CD4-positive, alpha-beta T cell (primary cell): ENCODE measurements at regions of chr18 and their contacts with region 1.

Region 1: GRCh38 chr18:1891626-1892025 is 679.7 kb downstream of the METTL4 start:
- DNase-seq: no peak
- ATAC-seq: no peak
- H3K4me3 ChIP-seq: no peak overlapping the region
- H3K4me3 Mint-ChIP-seq: no peak overlapping the region
- H3K27ac ChIP-seq: no peak overlapping the region
- H3K27ac Mint-ChIP-seq: no peak overlapping the region
- H3K4me1 ChIP-seq: no peaks in the 10 kb centered on the region
- H3K4me1 Mint-ChIP-seq: no peaks in the 10 kb centered on the region
- H3K27me3 ChIP-seq: no peaks in the 10 kb centered on the region
- H3K27me3 Mint-ChIP-seq: no peaks in the 10 kb centered on the region
- CTCF ChIP-seq: no peak

Region 2: GRCh38 chr18:1825296-1825695 is 66.3 kb before region 1 on chr18:
- CTCF ChIA-PET with region 1: no interaction called
- POLR2A ChIA-PET with region 1: no interaction called
- intact Hi-C with region 1: loop called in 1 of 2 experiments (anchors 10 kb)
- DNase-seq: no peak
- ATAC-seq: no peak
- H3K4me3 ChIP-seq: no peak overlapping the region
- H3K4me3 Mint-ChIP-seq: no peak overlapping the region
- H3K27ac ChIP-seq: no peak overlapping the region
- H3K27ac Mint-ChIP-seq: no peak overlapping the region
- H3K4me1 ChIP-seq: no peaks in the 10 kb centered on the region
- H3K4me1 Mint-ChIP-seq: no peaks in the 10 kb centered on the region
- H3K27me3 ChIP-seq: no peaks in the 10 kb centered on the region
- H3K27me3 Mint-ChIP-seq: no peaks in the 10 kb centered on the region
- CTCF ChIP-seq: no peak

Region 3: GRCh38 chr18:3177902-3178687 is 1286.5 kb after region 1 on chr18:
- CTCF ChIA-PET with region 1: no interaction called
- POLR2A ChIA-PET with region 1: no interaction called
- intact Hi-C with region 1: no loop called
- DNase-seq: peak in 3 of 14 experiments; percentile 43 to 80 (median 74)
- ATAC-seq: peak; percentile 32
- H3K4me3 ChIP-seq: no peak overlapping the region
- H3K4me3 Mint-ChIP-seq: no peak overlapping the region
- H3K27ac ChIP-seq: no peak overlapping the region
- H3K27ac Mint-ChIP-seq: no peak overlapping the region
- H3K4me1 ChIP-seq: no peaks in the 10 kb centered on the region
- H3K4me1 Mint-ChIP-seq: no peaks in the 10 kb centered on the region
- H3K27me3 ChIP-seq: no peaks in the 10 kb centered on the region
- H3K27me3 Mint-ChIP-seq: no peaks in the 10 kb centered on the region
- CTCF ChIP-seq: no peak